Gastrocnemius medialis (tissue), 4 donors: ENCODE measurements at regions of chr1 and their contacts with region 1.

Region 1: GRCh38 chr1:29181413-29182225 is at the start of gene SRSF4:
- DNase-seq: peak; percentile 99
- ATAC-seq: peak; percentile 90 to 92
- H3K4me3 ChIP-seq: peak within 1 kb of the TSS; percentile 78 to 98 (median 82)
- H3K27ac ChIP-seq: peak within 1 kb of the TSS; percentile 94 to 100 (median 97)
- H3K4me1 ChIP-seq: peaks cover 40 to 48% of the 10 kb centered on the region in 2 donors
- H3K27me3 ChIP-seq: no peaks in the 10 kb centered on the region
- CTCF ChIP-seq: peak; percentile 57 to 81 (median 74)
- POLR2A ChIP-seq: peak; percentile 95 to 98
- total RNA-seq, gene SRSF4: 42.4 to 72.5 (median 65.4) TPM

Region 2: DNA sequence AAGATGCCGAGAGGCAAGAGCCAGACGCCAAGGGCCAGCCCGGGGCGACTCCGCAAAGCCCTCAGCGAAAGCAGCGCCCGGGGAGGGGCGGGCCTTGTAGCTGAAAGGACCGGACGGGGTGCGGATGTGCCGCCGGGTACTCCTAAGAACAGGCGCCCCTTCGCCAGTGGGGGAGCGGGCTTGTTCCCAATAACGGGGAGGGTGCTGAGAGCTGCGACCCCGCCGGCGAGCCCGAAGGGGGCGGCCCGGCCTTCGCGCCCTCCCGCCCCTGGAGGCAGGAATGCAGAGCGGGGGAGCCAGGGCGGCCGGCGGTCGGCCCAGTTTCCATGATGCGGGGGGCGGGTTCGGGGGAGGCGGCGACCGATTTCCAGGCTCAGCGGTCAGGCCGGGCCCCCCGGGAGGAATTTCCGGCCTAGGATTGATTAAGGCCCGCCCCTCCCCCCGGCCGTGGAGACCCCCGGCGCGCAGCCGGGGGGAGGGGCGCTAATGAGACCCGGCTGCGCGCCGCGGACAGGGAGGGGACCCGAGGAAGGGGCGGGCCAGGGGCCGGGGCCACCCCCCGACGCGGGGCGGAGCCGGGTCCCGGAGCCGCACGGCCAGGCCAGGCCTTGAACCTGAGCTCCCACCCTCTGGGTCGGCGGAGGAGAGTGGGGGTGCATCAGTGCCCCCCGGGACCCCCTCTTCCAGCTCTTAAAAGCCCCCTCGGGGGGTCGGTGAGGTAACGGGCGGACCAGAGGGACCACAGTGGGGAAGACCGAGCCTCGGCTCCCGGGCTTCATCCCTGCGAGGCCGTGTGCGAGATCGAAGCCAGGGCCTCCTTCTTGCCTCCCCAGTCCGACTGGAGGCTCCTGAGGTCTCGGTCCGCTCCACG is 57.0 kb before region 1 on chr1:
- in situ Hi-C with region 1: no loop called
- intact Hi-C with region 1: loop called (anchors 2 kb)
- DNase-seq: peak; percentile 22 to 33
- ATAC-seq: peak; percentile 56 to 62
- H3K4me3 ChIP-seq: peak overlapping the region; percentile 55 to 80 (median 62)
- H3K27ac ChIP-seq: peak overlapping the region; percentile 71 to 82 (median 78)
- H3K4me1 ChIP-seq: peaks cover 0 to 22% of the 10 kb centered on the region in 2 donors
- H3K27me3 ChIP-seq: peaks cover 30 to 46% (median 33%) of the 10 kb centered on the region in 3 donors
- CTCF ChIP-seq: peak; percentile 59 to 85 (median 77)
- POLR2A ChIP-seq: peak; percentile 44 to 55